ENCODE measurements at regions of chr3 and their contacts with region 1.

Region 1: GRCh38 chr3:98763076-98763475 is at the start of gene ST3GAL6:
- DNase-seq: peak; percentile 87 to 96 (median 90)
- H3K4me3 ChIP-seq: peak within 1 kb of the TSS; percentile 60 to 98 (median 85)
- H3K4me3 Mint-ChIP-seq: peak within 1 kb of the TSS; percentile 86 to 94
- H3K27ac ChIP-seq: peak within 1 kb of the TSS; percentile 84 to 92
- H3K27ac Mint-ChIP-seq: peak within 1 kb of the TSS; percentile 94 to 99 (median 99)
- H3K4me1 ChIP-seq: peaks cover 73 to 85% of the 10 kb centered on the region in 2 donors
- H3K4me1 Mint-ChIP-seq: peaks cover 79% of the 10 kb centered on the region
- H3K27me3 ChIP-seq: no peaks in the 10 kb centered on the region
- H3K27me3 Mint-ChIP-seq: no peaks in the 10 kb centered on the region
- CTCF ChIP-seq: no peak
- polyA plus RNA-seq, gene ST3GAL6: 21.0 to 49.5 (median 22.8) TPM

Region 2: GRCh38 chr3:98593046-98593936 is 169.8 kb before region 1 on chr3 and contains the start of gene CPOX:
- intact Hi-C with region 1: loop called in 1 of 2 experiments (anchors 10 kb)
- DNase-seq: peak; percentile 57 to 67 (median 65)
- H3K4me3 ChIP-seq: peak within 1 kb of the TSS; percentile 54 to 83 (median 75)
- H3K4me3 Mint-ChIP-seq: peak within 1 kb of the TSS; percentile 90 to 99
- H3K27ac ChIP-seq: peak within 1 kb of the TSS; percentile 5 to 80
- H3K27ac Mint-ChIP-seq: peak within 1 kb of the TSS; percentile 76 to 96 (median 90)
- H3K4me1 ChIP-seq: peaks cover 46 to 64% of the 10 kb centered on the region in 2 donors
- H3K4me1 Mint-ChIP-seq: peaks cover 63% of the 10 kb centered on the region
- H3K27me3 ChIP-seq: no peaks in the 10 kb centered on the region
- H3K27me3 Mint-ChIP-seq: peaks cover 0 to 5% (median 2%) of the 10 kb centered on the region in 3 donors
- CTCF ChIP-seq: no peak
- polyA plus RNA-seq, gene CPOX: 4.2 to 12.8 (median 5.2) TPM

Region 3: DNA sequence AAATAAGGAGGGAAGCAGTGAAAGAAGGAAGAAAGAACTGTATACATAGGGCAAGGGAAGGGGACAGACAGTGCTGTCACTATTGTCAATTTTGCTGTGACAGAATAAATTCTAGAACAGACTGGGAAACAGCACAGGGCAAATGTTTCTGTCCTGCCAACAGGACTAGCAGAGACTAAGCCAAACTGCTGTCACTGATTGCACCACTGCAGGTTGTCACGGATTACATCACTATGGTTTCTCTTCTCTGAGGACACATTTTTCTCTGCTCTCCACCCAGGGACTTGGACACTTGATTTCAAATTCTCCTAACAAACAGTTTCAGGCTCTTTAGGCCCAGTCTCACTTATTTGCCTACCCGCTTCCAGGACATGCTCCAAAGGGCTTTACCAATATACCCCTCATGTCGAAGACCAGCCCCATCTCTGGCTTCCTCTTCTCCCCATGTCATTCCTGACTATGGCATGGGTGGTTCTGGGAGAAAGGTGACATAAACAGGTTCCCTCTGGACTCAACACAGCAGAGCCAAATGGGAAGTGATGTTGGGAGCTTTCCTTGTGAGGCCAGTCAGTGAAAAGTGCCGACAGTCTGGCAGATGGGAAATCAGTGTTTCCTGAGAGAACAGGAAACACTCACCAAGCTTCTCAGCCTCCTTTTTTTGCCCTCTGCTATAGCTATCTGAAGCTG is 70.1 kb before region 1 on chr3:
- intact Hi-C with region 1: loop called in 1 of 2 experiments (anchors 10 kb)
- DNase-seq: peak in 1 of 3 donors; percentile 86
- H3K4me3 ChIP-seq: no peak overlapping the region
- H3K4me3 Mint-ChIP-seq: peak overlapping the region in 1 of 2 donors; percentile 67
- H3K27ac ChIP-seq: peak overlapping the region in 1 of 2 donors; percentile 32
- H3K27ac Mint-ChIP-seq: peak overlapping the region in 4 of 7 donors; percentile 81 to 91 (median 84)
- H3K4me1 ChIP-seq: peaks cover 0 to 13% of the 10 kb centered on the region in 2 donors
- H3K4me1 Mint-ChIP-seq: no peaks in the 10 kb centered on the region
- H3K27me3 ChIP-seq: no peaks in the 10 kb centered on the region
- H3K27me3 Mint-ChIP-seq: no peaks in the 10 kb centered on the region
- CTCF ChIP-seq: no peak

Region 4: GRCh38 chr3:98732286-98733052 is 30.6 kb before region 1 on chr3:
- intact Hi-C with region 1: loop called in 1 of 2 experiments (anchors 5 kb)
- DNase-seq: peak in 2 of 3 donors; percentile 23
- H3K4me3 ChIP-seq: peak overlapping the region; percentile 70 to 89 (median 80)
- H3K4me3 Mint-ChIP-seq: peak overlapping the region; percentile 93 to 97
- H3K27ac ChIP-seq: peak overlapping the region in 1 of 2 donors; percentile 52
- H3K27ac Mint-ChIP-seq: peak overlapping the region; percentile 3 to 86 (median 80)
- H3K4me1 ChIP-seq: peaks cover 38 to 45% of the 10 kb centered on the region in 2 donors
- H3K4me1 Mint-ChIP-seq: peaks cover 37% of the 10 kb centered on the region
- H3K27me3 ChIP-seq: peaks cover 0 to 4% of the 10 kb centered on the region in 2 donors
- H3K27me3 Mint-ChIP-seq: peaks cover 0 to 12% (median 10%) of the 10 kb centered on the region in 3 donors
- CTCF ChIP-seq: no peak

Region 5: GRCh38 chr3:98778852-98779413 is 15.9 kb after region 1 on chr3:
- intact Hi-C with region 1: loop called in 1 of 2 experiments (anchors 2 kb)
- DNase-seq: peak; percentile 77 to 95 (median 94)
- H3K4me3 ChIP-seq: peak overlapping the region in 2 of 3 experiments; percentile 16 to 49
- H3K4me3 Mint-ChIP-seq: peak overlapping the region; percentile 16 to 68
- H3K27ac ChIP-seq: peak overlapping the region; percentile 70 to 94
- H3K27ac Mint-ChIP-seq: peak overlapping the region; percentile 93 to 98 (median 96)
- H3K4me1 ChIP-seq: peaks cover 42 to 69% of the 10 kb centered on the region in 2 donors
- H3K4me1 Mint-ChIP-seq: peaks cover 61% of the 10 kb centered on the region
- H3K27me3 ChIP-seq: no peaks in the 10 kb centered on the region
- H3K27me3 Mint-ChIP-seq: no peaks in the 10 kb centered on the region
- CTCF ChIP-seq: no peak

Region 6: DNA sequence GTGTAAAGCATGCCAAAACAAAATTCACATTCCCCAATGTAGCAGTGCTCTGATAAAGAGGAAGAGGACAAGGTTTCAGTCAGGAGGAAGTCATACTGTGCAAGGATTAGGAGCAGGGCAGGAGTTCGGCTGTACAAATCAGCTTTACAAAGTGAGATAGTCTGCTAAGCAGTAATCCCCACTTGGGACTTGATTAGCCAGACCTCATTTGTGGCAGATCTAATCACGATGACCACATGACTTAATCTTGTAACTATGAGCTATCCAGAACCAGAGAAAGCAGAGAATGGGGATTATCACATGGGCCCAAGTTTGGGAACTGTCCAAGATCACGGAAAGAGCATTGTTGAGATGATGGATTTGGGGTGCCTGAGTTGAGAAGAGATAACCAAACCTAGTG is 130.7 kb after region 1 on chr3:
- intact Hi-C with region 1: no loop called
- DNase-seq: no peak
- H3K4me3 ChIP-seq: no peak overlapping the region
- H3K4me3 Mint-ChIP-seq: no peak overlapping the region
- H3K27ac ChIP-seq: no peak overlapping the region
- H3K27ac Mint-ChIP-seq: no peak overlapping the region
- H3K4me1 ChIP-seq: no peaks in the 10 kb centered on the region
- H3K4me1 Mint-ChIP-seq: peaks cover 2% of the 10 kb centered on the region
- H3K27me3 ChIP-seq: no peaks in the 10 kb centered on the region
- H3K27me3 Mint-ChIP-seq: peaks cover 0 to 2% (median 1%) of the 10 kb centered on the region in 3 donors
- CTCF ChIP-seq: no peak

Region 7: DNA sequence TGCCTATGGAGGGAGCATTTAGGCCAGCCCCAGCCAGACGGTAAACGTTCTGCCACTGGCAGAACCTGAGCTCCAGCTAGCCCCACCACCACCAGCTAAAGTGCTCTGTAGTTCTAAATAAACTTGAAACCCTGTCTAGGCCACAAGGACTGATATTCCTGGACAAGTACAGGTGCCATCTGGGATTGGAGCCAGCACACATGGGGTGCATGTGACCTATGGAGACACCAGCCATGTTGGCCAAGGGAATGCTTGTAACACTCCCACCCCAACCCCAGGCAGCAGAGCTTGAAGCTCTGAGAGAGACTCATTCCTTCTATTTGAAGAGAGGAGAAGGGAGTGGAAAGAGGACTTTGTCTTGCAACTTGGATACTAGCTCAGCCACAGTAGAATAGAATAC is 422.9 kb after region 1 on chr3:
- intact Hi-C with region 1: no loop called
- DNase-seq: no peak
- H3K4me3 ChIP-seq: no peak overlapping the region
- H3K4me3 Mint-ChIP-seq: no peak overlapping the region
- H3K27ac ChIP-seq: no peak overlapping the region
- H3K27ac Mint-ChIP-seq: no peak overlapping the region
- H3K4me1 ChIP-seq: no peaks in the 10 kb centered on the region
- H3K4me1 Mint-ChIP-seq: no peaks in the 10 kb centered on the region
- H3K27me3 ChIP-seq: no peaks in the 10 kb centered on the region
- H3K27me3 Mint-ChIP-seq: no peaks in the 10 kb centered on the region
- CTCF ChIP-seq: no peak

Measured in CD14-positive monocyte (primary cell).